HCT116 (cell line): ENCODE measurements at regions of chr10 and their contacts with region 1.

Region 1: DNA sequence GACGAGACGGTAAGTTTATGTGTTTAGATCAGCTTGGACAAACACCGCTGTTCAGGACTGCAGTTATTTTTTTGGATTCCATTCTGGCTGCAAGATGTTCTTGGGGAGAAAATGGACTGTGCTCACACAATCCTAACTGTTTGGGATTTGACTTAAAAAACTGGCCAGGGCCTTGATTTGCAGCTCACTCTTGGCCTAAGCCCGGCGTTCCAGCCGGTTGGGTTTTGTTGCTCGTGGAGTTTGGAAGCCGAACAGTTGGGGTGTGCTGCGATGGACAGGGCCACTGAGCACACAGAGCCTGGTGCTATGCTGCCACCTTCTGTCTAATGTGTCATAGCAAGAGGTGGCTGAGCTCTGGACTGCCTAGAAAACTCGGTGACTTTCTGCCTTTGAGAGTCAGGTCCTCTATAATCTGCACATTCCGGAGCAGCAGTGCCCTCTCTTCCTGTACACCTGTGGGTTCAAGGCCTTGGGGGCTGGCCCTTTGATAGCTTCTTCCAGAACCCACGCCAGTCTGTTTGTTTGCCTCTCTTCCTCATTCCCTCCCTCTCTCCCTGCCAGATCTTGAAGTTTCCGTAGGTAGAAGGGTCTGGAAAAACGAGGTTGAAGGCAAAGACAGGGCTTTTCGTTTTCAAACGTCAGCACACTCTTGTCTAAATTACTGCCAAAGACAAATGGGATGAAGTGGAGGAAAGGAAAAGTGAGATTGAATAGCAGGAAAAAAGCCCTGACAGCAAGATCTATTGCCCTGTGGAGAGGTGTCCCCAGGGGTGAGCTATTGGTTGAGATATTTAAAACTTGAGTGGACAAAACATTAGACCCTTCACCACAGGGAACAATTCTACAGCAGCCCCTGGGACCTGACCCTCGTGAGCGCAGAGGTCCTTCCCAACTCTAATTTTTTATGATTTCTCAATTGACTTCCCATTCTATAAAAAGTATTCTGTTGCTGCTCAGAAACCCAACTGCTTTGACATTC is 167.5 kb upstream of the HABP2 start:
- DNase-seq: peak; percentile 85
- ATAC-seq: peak; percentile 99
- H3K4me3 ChIP-seq: no peak overlapping the region
- H3K27ac ChIP-seq: no peak overlapping the region
- H3K4me1 ChIP-seq: peaks cover 16 to 22% of the 10 kb centered on the region in 2 experiments
- H3K27me3 ChIP-seq: peaks cover 3% of the 10 kb centered on the region; the same call in 1 of the 2 replicates
- CTCF ChIP-seq: peak; percentile 91 to 98 (median 95)
- POLR2A ChIP-seq: no peak
- RAD21 ChIP-seq: peak; percentile 100

Region 2: DNA sequence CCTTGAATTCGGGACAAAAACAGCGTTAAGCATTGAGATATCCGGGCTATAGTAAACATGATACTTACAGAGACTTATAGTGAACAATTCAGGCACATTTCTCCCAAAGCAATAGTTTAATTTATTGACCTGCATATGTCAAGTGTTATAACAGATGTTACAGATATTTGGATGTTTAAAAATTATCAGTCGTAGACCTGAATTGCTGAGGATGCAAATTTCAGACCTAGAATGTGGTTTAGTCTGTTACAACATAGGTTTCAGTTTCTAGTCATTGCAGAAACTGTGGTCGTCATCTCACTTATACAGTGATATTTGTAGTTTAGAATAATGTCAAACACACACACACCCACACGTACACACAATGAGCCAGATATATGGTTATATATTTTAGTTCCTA is 853.1 kb before region 1 on chr10:
- CTCF ChIA-PET with region 1: interaction called, 12 read pairs
- POLR2A ChIA-PET with region 1: interaction called, 3 read pairs
- RAD21 ChIA-PET with region 1: no interaction called
- intact Hi-C with region 1: no loop called
- DNase-seq: no peak
- ATAC-seq: no peak
- H3K4me3 ChIP-seq: peak overlapping the region; percentile 24 to 52
- H3K27ac ChIP-seq: peak overlapping the region; percentile 90
- H3K4me1 ChIP-seq: peaks cover 92 to 99% of the 10 kb centered on the region in 2 experiments
- H3K27me3 ChIP-seq: no peaks in the 10 kb centered on the region
- CTCF ChIP-seq: no peak
- POLR2A ChIP-seq: no peak
- RAD21 ChIP-seq: no peak

Region 3: GRCh38 chr10:112663234-112664125 is 721.8 kb before region 1 on chr10:
- CTCF ChIA-PET with region 1: no interaction called
- POLR2A ChIA-PET with region 1: no interaction called
- RAD21 ChIA-PET with region 1: no interaction called
- intact Hi-C with region 1: loop called (anchors 10 kb)
- DNase-seq: peak; percentile 75
- ATAC-seq: peak; percentile 89
- H3K4me3 ChIP-seq: no peak overlapping the region
- H3K27ac ChIP-seq: peak overlapping the region; percentile 32; the same call in 1 of the 2 replicates
- H3K4me1 ChIP-seq: peaks cover 27 to 46% of the 10 kb centered on the region in 2 experiments
- H3K27me3 ChIP-seq: no peaks in the 10 kb centered on the region
- CTCF ChIP-seq: no peak
- POLR2A ChIP-seq: no peak
- RAD21 ChIP-seq: peak; percentile 16; the same call in 1 of the 2 replicates

Region 4: GRCh38 chr10:112949875-112950507 is 435.3 kb before region 1 on chr10 and contains the start of gene TCF7L2:
- CTCF ChIA-PET with region 1: no interaction called
- POLR2A ChIA-PET with region 1: no interaction called
- RAD21 ChIA-PET with region 1: no interaction called
- intact Hi-C with region 1: loop called (anchors 2 kb)
- DNase-seq: peak; percentile 100
- ATAC-seq: peak; percentile 84
- H3K4me3 ChIP-seq: peak within 1 kb of the TSS; percentile 73 to 78
- H3K27ac ChIP-seq: peak within 1 kb of the TSS; percentile 100
- H3K4me1 ChIP-seq: peaks cover 39 to 47% of the 10 kb centered on the region in 2 experiments
- H3K27me3 ChIP-seq: no peaks in the 10 kb centered on the region
- CTCF ChIP-seq: no peak
- POLR2A ChIP-seq: no peak
- RAD21 ChIP-seq: no peak
- total RNA-seq, gene TCF7L2: 164 TPM

Region 5: GRCh38 chr10:113139699-113140098 is 245.6 kb before region 1 on chr10:
- CTCF ChIA-PET with region 1: no interaction called
- POLR2A ChIA-PET with region 1: no interaction called
- RAD21 ChIA-PET with region 1: no interaction called
- intact Hi-C with region 1: loop called (anchors 10 kb)
- DNase-seq: no peak
- ATAC-seq: no peak
- H3K4me3 ChIP-seq: no peak overlapping the region
- H3K27ac ChIP-seq: no peak overlapping the region
- H3K4me1 ChIP-seq: peaks cover 5 to 8% of the 10 kb centered on the region in 2 experiments; a peak in 2 of 4 replicates
- H3K27me3 ChIP-seq: no peaks in the 10 kb centered on the region
- CTCF ChIP-seq: peak; percentile 16 to 40 (median 37); a peak in 3 of 6 replicates
- POLR2A ChIP-seq: no peak
- RAD21 ChIP-seq: peak; percentile 28; the same call in 1 of the 2 replicates

Region 6: DNA sequence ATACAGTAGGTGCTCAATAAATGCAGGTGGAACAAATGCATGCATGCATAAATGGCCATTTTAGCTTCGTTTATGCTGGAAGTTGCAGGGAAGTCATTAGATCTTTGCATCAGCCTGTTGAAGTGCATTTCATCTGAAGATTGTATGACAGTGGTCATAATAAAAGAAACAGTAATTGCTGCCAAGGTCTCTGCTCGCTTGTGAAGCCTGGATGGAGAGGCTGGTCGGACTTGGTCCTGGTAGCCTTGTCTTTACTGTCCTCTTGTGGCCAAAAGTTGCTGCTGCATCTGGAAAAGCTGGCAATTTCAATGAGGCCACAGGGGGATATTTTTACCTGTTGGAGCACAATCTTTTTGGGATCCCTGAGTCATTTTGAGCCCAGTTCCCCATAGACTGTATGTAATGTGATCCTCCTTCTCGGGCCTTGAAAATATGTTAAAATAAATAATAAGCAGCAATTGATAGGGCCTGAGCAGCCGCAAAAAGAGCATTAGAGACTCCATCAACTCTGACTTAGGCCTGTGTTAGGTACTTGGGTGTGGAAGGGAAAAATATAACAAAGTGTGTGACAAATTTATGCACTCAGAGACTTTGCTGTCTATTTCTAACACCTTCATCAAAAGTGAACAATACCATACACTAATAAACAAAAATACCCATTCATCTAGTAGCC is 135.9 kb after region 1 on chr10:
- CTCF ChIA-PET with region 1: interaction called, 6 read pairs
- POLR2A ChIA-PET with region 1: no interaction called
- RAD21 ChIA-PET with region 1: no interaction called
- intact Hi-C with region 1: loop called (anchors 5 kb)
- DNase-seq: peak; percentile 75
- ATAC-seq: peak; percentile 90
- H3K4me3 ChIP-seq: no peak overlapping the region
- H3K27ac ChIP-seq: no peak overlapping the region
- H3K4me1 ChIP-seq: peaks cover 9 to 11% of the 10 kb centered on the region in 2 experiments; a peak in 3 of 4 replicates
- H3K27me3 ChIP-seq: no peaks in the 10 kb centered on the region
- CTCF ChIP-seq: peak; percentile 91 to 100 (median 100)
- POLR2A ChIP-seq: no peak
- RAD21 ChIP-seq: peak; percentile 99